T-cell (primary cell): ENCODE measurements at regions of chr9 and their contacts with region 1.

Region 1: GRCh38 chr9:120715389-120715924 is 1.2 kb upstream of the MEGF9 start:
- DNase-seq: no peak
- ATAC-seq: no peak
- H3K4me3 ChIP-seq: peak overlapping the region in 1 of 2 donors; percentile 77
- H3K4me3 Mint-ChIP-seq: peak overlapping the region; percentile 80 to 98 (median 83)
- H3K27ac ChIP-seq: no peak overlapping the region
- H3K27ac Mint-ChIP-seq: no peak overlapping the region
- H3K4me1 ChIP-seq: peaks cover 20 to 22% of the 10 kb centered on the region in 2 experiments
- H3K4me1 Mint-ChIP-seq: peaks cover 31 to 35% (median 34%) of the 10 kb centered on the region in 3 donors
- H3K27me3 ChIP-seq: no peaks in the 10 kb centered on the region
- H3K27me3 Mint-ChIP-seq: no peaks in the 10 kb centered on the region

Region 2: GRCh38 chr9:120689860-120690259 is 25.6 kb before region 1 on chr9:
- CTCF ChIA-PET with region 1: no interaction called
- POLR2A ChIA-PET with region 1: no interaction called
- DNase-seq: no peak
- ATAC-seq: no peak
- H3K4me3 ChIP-seq: no peak overlapping the region
- H3K4me3 Mint-ChIP-seq: no peak overlapping the region
- H3K27ac ChIP-seq: no peak overlapping the region
- H3K27ac Mint-ChIP-seq: no peak overlapping the region
- H3K4me1 ChIP-seq: no peaks in the 10 kb centered on the region
- H3K4me1 Mint-ChIP-seq: peaks cover 20 to 34% (median 22%) of the 10 kb centered on the region in 3 donors
- H3K27me3 ChIP-seq: no peaks in the 10 kb centered on the region
- H3K27me3 Mint-ChIP-seq: no peaks in the 10 kb centered on the region

Region 3: GRCh38 chr9:120745278-120745677 is 29.8 kb after region 1 on chr9:
- CTCF ChIA-PET with region 1: interaction called in 1 of 2 experiments, 13 read pairs
- POLR2A ChIA-PET with region 1: no interaction called
- DNase-seq: no peak
- ATAC-seq: no peak
- H3K4me3 ChIP-seq: no peak overlapping the region
- H3K4me3 Mint-ChIP-seq: no peak overlapping the region
- H3K27ac ChIP-seq: no peak overlapping the region
- H3K27ac Mint-ChIP-seq: no peak overlapping the region
- H3K4me1 ChIP-seq: no peaks in the 10 kb centered on the region
- H3K4me1 Mint-ChIP-seq: peaks cover 0 to 2% (median 0%) of the 10 kb centered on the region in 3 donors
- H3K27me3 ChIP-seq: no peaks in the 10 kb centered on the region
- H3K27me3 Mint-ChIP-seq: no peaks in the 10 kb centered on the region